ENCODE measurements at regions of chr9 and their contacts with region 1.

Region 1: DNA sequence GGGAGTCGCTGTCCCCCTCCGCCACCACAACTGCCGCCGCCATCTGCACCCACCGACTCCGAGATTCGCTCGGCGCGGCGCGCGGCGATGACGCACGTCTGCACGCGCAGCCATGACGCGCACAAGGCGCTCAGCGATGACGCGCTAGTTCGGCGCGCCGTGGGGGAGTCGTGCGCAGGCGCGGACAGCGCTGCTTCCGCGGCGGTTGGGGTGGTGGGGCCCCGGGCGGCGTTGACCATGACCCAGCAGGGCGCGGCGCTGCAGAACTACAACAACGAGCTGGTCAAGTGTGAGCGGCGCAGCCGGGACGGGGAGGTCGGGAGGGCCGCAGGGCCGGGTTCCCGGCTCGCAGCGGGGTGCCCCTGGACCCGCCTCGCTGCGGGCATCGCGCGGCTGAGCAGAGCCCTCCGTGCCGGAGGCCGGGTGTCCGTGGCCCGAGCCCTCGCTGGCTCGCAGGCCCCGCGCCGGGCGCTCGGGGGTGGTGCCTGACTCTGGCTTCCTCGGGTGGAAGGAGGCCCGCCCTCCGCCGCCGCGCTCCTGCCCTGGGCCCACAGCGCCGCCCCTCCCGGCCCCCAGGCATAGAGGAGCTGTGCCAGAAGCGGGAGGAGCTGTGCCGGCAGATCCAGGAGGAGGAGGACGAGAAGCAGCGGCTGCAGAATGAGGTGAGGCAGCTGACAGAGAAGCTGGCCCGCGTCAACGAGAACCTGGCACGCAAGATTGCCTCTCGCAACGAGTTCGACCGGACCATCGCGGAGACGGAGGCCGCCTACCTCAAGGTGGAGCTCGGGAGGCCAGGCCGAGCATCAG is at the starts of genes ANAPC2 and SSNA1:
- DNase-seq: peak; percentile 93 to 97
- H3K4me3 ChIP-seq: peak within 1 kb of the TSS; percentile 96
- H3K4me3 Mint-ChIP-seq: peak within 1 kb of the TSS; percentile 98
- H3K27ac Mint-ChIP-seq: peak within 1 kb of the TSS; percentile 93
- H3K4me1 ChIP-seq: peaks cover 16% of the 10 kb centered on the region
- H3K4me1 Mint-ChIP-seq: peaks cover 20% of the 10 kb centered on the region
- H3K27me3 ChIP-seq: no peaks in the 10 kb centered on the region
- H3K27me3 Mint-ChIP-seq: no peaks in the 10 kb centered on the region
- CTCF ChIP-seq: peak; percentile 38 to 56
- total RNA-seq, gene ANAPC2: 66.8 and 67.5 TPM in 2 replicates
- total RNA-seq, gene SSNA1: 62.3 and 62.7 TPM in 2 replicates

Region 2: GRCh38 chr9:137129456-137130175 is 59.1 kb before region 1 on chr9:
- CTCF ChIA-PET with region 1: interaction called, 12 read pairs
- POLR2A ChIA-PET with region 1: interaction called, 7 read pairs
- intact Hi-C with region 1: no loop called
- DNase-seq: peak; percentile 88 to 90
- H3K4me3 ChIP-seq: peak overlapping the region; percentile 87
- H3K4me3 Mint-ChIP-seq: peak overlapping the region; percentile 82
- H3K27ac Mint-ChIP-seq: peak overlapping the region; percentile 89
- H3K4me1 ChIP-seq: 0 out of 2 replicates have a peak, but pooled peaks cover 9% of the 10 kb centered on the region
- H3K4me1 Mint-ChIP-seq: peaks cover 21% of the 10 kb centered on the region
- H3K27me3 ChIP-seq: no peaks in the 10 kb centered on the region
- H3K27me3 Mint-ChIP-seq: no peaks in the 10 kb centered on the region
- CTCF ChIP-seq: no peak

Region 3: DNA sequence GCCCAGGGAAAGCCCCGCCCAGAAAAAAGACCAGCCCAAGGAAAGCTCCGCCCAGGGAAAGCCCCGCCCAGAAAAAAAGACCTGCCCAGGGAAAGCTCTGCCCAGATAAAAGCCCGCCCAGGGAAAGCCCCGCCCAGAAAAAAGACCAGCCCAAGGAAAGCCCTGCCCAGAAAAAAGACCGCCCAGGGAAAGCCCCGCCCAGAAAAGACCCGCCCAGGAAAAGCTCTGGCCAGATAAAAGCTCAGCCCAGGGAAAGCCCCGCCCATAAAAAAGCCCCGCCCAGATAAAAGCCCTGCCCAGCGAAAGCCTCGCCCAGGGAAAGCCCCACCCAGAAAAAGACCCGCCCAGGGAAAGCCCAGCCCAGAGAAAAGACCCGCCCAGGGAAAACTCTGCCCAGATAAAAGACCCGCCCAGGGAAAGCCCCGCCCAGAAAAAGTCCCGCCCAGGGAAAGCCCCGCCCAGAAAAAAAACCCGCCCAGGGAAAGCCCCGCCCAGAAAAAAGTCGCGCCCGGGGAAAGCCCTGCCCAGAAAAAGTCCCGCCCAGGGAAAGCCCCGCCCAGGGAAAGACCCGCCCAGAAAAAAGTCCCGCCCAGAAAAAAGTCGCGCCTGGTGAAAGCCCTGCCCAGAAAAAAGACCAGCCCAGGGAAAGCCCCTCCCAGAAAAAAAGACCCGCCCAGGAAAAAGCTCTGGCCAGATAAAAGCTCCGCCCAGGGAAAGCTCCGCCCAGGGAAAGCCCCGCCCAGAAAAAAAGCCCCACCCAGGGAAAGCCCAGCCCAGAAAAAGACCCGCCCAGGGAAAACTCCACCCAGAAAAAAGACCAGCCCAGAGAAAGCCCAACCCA is 37.9 kb before region 1 on chr9:
- CTCF ChIA-PET with region 1: interaction called, 9 read pairs
- POLR2A ChIA-PET with region 1: no interaction called
- intact Hi-C with region 1: loop called (anchors 1 kb)
- DNase-seq: peak; percentile 74 to 91
- H3K4me3 ChIP-seq: no peak overlapping the region
- H3K4me3 Mint-ChIP-seq: peak overlapping the region; percentile 7
- H3K27ac Mint-ChIP-seq: no peak overlapping the region
- H3K4me1 ChIP-seq: no peaks in the 10 kb centered on the region
- H3K4me1 Mint-ChIP-seq: no peaks in the 10 kb centered on the region
- H3K27me3 ChIP-seq: no peaks in the 10 kb centered on the region
- H3K27me3 Mint-ChIP-seq: peaks cover 8% of the 10 kb centered on the region
- CTCF ChIP-seq: no peak

Region 4: DNA sequence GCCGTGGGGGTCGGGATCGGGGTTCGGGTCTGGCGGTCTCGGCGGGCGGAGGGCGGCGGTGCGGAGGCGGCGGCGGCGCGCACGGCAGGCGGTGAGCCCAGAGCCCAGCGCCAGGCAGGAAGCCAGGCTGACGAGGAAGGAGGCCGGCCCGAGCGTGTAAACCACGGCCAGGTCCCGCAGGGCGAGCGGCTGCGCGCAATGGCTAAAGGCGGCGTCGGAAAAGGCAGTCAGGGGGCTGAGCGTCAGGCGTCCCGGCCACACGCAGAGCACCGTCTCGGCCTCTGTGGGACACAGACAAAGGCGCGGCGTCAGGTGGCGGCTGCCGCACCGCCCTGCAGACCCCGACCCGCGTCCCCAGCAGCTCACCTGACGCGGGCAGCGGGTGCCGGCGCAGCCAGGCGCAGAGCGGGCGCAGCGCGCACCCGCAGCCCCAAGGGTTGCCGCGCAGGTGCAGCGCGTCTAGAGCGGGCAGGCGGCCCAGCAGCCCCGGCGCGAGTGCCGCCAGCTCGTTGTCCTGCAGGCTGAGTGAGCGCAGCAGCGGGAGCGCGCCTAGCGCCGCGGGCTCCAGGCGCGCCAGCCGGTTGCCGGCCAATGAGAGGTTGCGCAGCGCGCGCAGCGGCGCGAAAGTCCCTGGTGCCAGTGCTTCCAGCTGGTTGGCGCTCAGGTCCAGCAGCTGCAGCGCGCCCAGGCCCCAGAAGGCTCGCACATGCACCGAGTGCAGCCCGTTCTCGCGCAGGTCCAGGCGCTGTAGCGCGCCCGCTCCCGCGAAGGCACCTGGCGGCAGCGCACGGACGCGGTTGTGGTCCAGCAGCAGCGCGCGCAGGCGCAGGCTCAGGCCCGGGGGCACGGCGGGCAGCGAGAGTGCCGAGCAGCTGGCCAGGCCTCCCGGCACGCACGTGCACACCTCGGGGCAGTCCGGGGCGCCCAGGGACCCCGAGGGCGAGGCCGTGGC is 19.5 kb before region 1 on chr9:
- CTCF ChIA-PET with region 1: interaction called, 16 read pairs
- POLR2A ChIA-PET with region 1: interaction called, 3 read pairs
- intact Hi-C with region 1: no loop called
- DNase-seq: peak; percentile 75 to 76
- H3K4me3 ChIP-seq: peak overlapping the region; percentile 74
- H3K4me3 Mint-ChIP-seq: peak overlapping the region; percentile 79
- H3K27ac Mint-ChIP-seq: no peak overlapping the region
- H3K4me1 ChIP-seq: peaks cover 13% of the 10 kb centered on the region
- H3K4me1 Mint-ChIP-seq: peaks cover 6% of the 10 kb centered on the region
- H3K27me3 ChIP-seq: peaks cover 2% of the 10 kb centered on the region; the same call in 1 of the 2 replicates
- H3K27me3 Mint-ChIP-seq: peaks cover 4% of the 10 kb centered on the region
- CTCF ChIP-seq: no peak

Region 5: DNA sequence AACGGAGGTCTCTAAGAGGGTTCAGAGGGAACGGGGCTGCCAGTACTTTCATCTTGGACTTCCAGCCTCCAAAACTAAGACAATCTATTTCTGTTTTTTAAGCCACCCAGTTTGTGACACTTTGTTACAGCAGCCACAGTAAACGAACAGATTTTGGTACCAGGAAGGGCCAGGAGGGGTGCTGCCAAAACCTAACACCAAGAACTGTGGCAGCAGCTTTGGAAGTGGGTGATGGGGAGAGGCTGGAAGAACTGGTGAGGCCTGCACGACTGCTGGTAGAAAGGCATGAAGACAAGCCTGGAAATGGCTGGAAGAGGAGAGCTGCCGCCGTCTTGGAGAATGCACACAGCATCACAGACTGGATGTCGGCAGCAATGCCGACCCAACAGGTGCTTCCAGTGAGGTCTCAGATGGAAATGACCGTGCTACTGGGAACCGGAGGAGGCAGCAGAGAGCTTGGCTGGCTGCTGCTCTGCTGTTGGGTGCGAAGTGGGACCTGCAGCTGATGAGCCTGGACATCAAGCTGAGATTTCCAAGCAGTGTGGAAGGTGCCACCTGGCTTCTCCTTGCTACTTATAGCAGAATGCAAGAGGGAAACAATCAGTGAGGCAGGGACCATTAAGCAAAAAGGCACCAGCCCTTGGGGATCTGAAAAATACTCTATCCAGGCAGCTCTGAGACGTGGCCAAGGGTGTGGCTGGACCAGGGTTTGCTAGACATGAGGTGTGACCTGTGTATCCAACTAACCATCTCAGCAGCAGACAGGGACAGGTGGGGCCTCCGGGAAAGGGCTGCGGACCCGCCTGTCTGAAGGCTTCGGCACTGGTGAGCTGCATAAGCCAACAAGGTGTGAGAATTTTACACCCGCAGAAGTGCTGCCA is 12.2 kb before region 1 on chr9:
- CTCF ChIA-PET with region 1: interaction called, 11 read pairs
- POLR2A ChIA-PET with region 1: interaction called, 3 read pairs
- intact Hi-C with region 1: no loop called
- DNase-seq: peak; percentile 65 to 71
- H3K4me3 ChIP-seq: no peak overlapping the region
- H3K4me3 Mint-ChIP-seq: no peak overlapping the region
- H3K27ac Mint-ChIP-seq: no peak overlapping the region
- H3K4me1 ChIP-seq: 0 out of 2 replicates have a peak, but pooled peaks cover 3% of the 10 kb centered on the region
- H3K4me1 Mint-ChIP-seq: no peaks in the 10 kb centered on the region
- H3K27me3 ChIP-seq: no peaks in the 10 kb centered on the region
- H3K27me3 Mint-ChIP-seq: no peaks in the 10 kb centered on the region
- CTCF ChIP-seq: peak; percentile 35 to 72

Region 6: GRCh38 chr9:137200311-137201204 is 11.9 kb after region 1 on chr9 and contains the start of gene TPRN:
- CTCF ChIA-PET with region 1: interaction called, 12 read pairs
- POLR2A ChIA-PET with region 1: interaction called, 21 read pairs
- intact Hi-C with region 1: loop called (anchors 1 kb)
- DNase-seq: peak; percentile 100
- H3K4me3 ChIP-seq: peak within 1 kb of the TSS; percentile 80
- H3K4me3 Mint-ChIP-seq: peak within 1 kb of the TSS; percentile 78
- H3K27ac Mint-ChIP-seq: peak within 1 kb of the TSS; percentile 64
- H3K4me1 ChIP-seq: peaks cover 37% of the 10 kb centered on the region
- H3K4me1 Mint-ChIP-seq: peaks cover under 1% of the 10 kb centered on the region
- H3K27me3 ChIP-seq: no peaks in the 10 kb centered on the region
- H3K27me3 Mint-ChIP-seq: no peaks in the 10 kb centered on the region
- CTCF ChIP-seq: no peak
- total RNA-seq, gene TPRN: 34.2 and 37.7 TPM in 2 replicates

Region 7: GRCh38 chr9:137223078-137223970 is 34.6 kb after region 1 on chr9:
- CTCF ChIA-PET with region 1: interaction called, 16 read pairs
- POLR2A ChIA-PET with region 1: interaction called, 14 read pairs
- intact Hi-C with region 1: loop called (anchors 2 kb)
- DNase-seq: peak; percentile 97 to 99
- H3K4me3 ChIP-seq: peak overlapping the region; percentile 69
- H3K4me3 Mint-ChIP-seq: peak overlapping the region; percentile 85
- H3K27ac Mint-ChIP-seq: no peak overlapping the region
- H3K4me1 ChIP-seq: peaks cover 21% of the 10 kb centered on the region
- H3K4me1 Mint-ChIP-seq: peaks cover 13% of the 10 kb centered on the region
- H3K27me3 ChIP-seq: no peaks in the 10 kb centered on the region
- H3K27me3 Mint-ChIP-seq: no peaks in the 10 kb centered on the region
- CTCF ChIP-seq: no peak

Measured in Caco-2 (cell line).